ENCODE measurements at regions of chrX and their contacts with region 1.

Region 1: DNA sequence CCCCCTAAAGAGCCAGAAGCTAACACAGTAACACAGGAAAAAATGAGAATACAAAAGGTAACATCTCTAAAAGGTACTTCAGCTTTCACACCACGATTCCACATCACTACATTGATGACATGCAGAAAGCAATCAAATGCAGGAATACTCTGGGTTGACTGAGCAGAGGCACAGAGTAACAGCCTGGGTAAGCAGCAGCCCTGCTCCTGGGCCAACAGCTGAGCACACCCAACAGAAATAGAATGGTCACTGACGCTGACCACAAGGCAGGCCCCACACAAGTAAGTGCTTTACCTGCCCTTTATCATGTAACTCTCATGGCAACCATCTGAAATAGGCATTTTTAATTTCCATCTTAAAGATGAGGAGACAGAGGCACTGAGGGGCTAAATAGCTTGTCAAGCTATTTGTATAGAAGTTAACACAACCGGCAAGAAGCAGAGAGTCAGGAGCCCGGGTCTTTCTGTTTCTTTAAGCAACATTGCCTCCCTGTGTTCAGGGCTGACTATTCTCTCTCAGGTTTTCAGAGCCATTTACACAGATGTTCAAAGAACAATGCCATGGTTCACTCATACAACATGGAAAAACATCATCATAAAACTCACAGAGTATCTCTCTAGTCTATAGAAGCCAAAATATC is 168.9 kb downstream of the ZNF674 start:
- DNase-seq: peak; percentile 79
- ATAC-seq: peak; percentile 88
- H3K4me3 ChIP-seq: no peak overlapping the region
- H3K27ac ChIP-seq: peak overlapping the region; percentile 79
- H3K4me1 ChIP-seq: peaks cover 26% of the 10 kb centered on the region
- H3K27me3 ChIP-seq: no peaks in the 10 kb centered on the region
- CTCF ChIP-seq: peak; percentile 76

Region 2: DNA sequence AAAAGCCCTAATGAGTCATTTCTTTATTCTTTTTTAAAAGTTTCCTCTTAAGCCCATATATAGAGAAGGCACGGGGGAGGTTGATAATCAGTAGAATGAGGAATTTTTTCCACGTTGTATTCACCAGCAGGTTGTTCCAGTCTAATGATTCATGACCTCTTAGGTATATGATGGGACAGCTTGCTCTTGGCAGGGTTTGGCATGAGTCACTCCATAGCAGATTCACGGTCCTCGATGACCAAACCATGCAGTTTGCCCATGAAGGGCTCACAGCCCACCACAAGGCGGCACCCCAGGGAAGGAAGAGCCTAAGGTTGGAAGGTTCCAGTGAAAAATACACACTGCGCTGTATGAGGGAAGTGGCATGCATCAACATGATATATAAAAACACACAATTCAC is 551.9 kb before region 1 on chrX:
- CTCF ChIA-PET with region 1: interaction called, 16 read pairs
- POLR2A ChIA-PET with region 1: no interaction called
- intact Hi-C with region 1: loop called (anchors 1 kb)
- DNase-seq: peak; percentile 96
- ATAC-seq: peak; percentile 96
- H3K4me3 ChIP-seq: no peak overlapping the region
- H3K27ac ChIP-seq: peak overlapping the region; percentile 71
- H3K4me1 ChIP-seq: peaks cover 33% of the 10 kb centered on the region
- H3K27me3 ChIP-seq: no peaks in the 10 kb centered on the region
- CTCF ChIP-seq: peak; percentile 91

Region 3: GRCh38 chrX:46208225-46208854 is 168.0 kb before region 1 on chrX:
- CTCF ChIA-PET with region 1: interaction called, 4 read pairs
- POLR2A ChIA-PET with region 1: interaction called, 13 read pairs
- intact Hi-C with region 1: loop called (anchors 10 kb)
- DNase-seq: peak; percentile 60
- ATAC-seq: peak; percentile 33; the same call in 1 of the 2 replicates
- H3K4me3 ChIP-seq: no peak overlapping the region
- H3K27ac ChIP-seq: peak overlapping the region; percentile 70
- H3K4me1 ChIP-seq: peaks cover 44% of the 10 kb centered on the region
- H3K27me3 ChIP-seq: no peaks in the 10 kb centered on the region
- CTCF ChIP-seq: no peak

Region 4: GRCh38 chrX:46260513-46260912 is 115.9 kb before region 1 on chrX:
- CTCF ChIA-PET with region 1: interaction called, 6 read pairs
- POLR2A ChIA-PET with region 1: no interaction called
- intact Hi-C with region 1: loop called (anchors 5 kb)
- DNase-seq: peak; percentile 95
- ATAC-seq: peak; percentile 82
- H3K4me3 ChIP-seq: no peak overlapping the region
- H3K27ac ChIP-seq: peak overlapping the region; percentile 91
- H3K4me1 ChIP-seq: peaks cover 58% of the 10 kb centered on the region
- H3K27me3 ChIP-seq: no peaks in the 10 kb centered on the region
- CTCF ChIP-seq: no peak

Region 5: GRCh38 chrX:46279925-46280313 is 96.4 kb before region 1 on chrX:
- CTCF ChIA-PET with region 1: no interaction called
- POLR2A ChIA-PET with region 1: no interaction called
- intact Hi-C with region 1: loop called (anchors 5 kb)
- DNase-seq: peak; percentile 34
- ATAC-seq: no peak
- H3K4me3 ChIP-seq: no peak overlapping the region
- H3K27ac ChIP-seq: peak overlapping the region; percentile 61
- H3K4me1 ChIP-seq: peaks cover 19% of the 10 kb centered on the region
- H3K27me3 ChIP-seq: no peaks in the 10 kb centered on the region
- CTCF ChIP-seq: no peak

Region 6: GRCh38 chrX:46325312-46325877 is 51.0 kb before region 1 on chrX:
- CTCF ChIA-PET with region 1: interaction called, 8 read pairs
- POLR2A ChIA-PET with region 1: interaction called, 7 read pairs
- intact Hi-C with region 1: loop called (anchors 5 kb)
- DNase-seq: peak; percentile 96
- ATAC-seq: peak; percentile 83
- H3K4me3 ChIP-seq: peak overlapping the region; percentile 64
- H3K27ac ChIP-seq: peak overlapping the region; percentile 98
- H3K4me1 ChIP-seq: peaks cover 52% of the 10 kb centered on the region
- H3K27me3 ChIP-seq: no peaks in the 10 kb centered on the region
- CTCF ChIP-seq: no peak

Region 7: DNA sequence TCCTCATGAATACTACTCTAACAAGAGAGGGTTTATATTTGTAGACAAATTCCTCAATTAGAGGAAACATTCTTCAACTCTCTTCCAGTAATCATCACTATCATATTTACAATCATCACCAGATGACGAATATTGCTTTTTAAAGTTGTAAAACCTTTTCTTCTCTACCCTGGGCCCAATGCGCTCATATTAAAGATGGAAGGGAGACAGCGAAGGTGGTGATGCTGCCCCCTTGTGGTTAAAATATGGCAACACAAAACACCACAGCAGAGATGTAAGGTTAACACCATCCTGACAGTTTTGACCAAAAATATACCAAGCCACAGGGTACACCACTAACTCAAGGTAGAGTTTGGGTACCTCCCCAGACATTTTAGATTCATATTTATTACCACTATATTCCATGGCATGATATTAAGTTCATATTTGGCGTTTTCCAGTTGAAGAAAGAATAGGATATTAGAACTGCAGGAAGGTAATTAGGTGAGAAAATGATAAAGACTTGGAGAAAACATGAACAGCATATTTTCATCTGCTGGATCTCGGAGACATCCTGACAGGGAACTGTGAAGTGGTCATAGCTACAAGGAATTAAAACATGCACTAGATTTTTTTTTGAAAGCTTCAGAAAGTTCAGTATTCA is 309.8 kb after region 1 on chrX:
- CTCF ChIA-PET with region 1: no interaction called
- POLR2A ChIA-PET with region 1: no interaction called
- intact Hi-C with region 1: no loop called
- DNase-seq: peak; percentile 53
- ATAC-seq: peak; percentile 65
- H3K4me3 ChIP-seq: no peak overlapping the region
- H3K27ac ChIP-seq: no peak overlapping the region
- H3K4me1 ChIP-seq: peaks cover 10% of the 10 kb centered on the region; the same call in 1 of the 2 replicates
- H3K27me3 ChIP-seq: no peaks in the 10 kb centered on the region
- CTCF ChIP-seq: peak; percentile 83